Heart left ventricle (tissue), 16 donors: ENCODE measurements at regions of chr2 and their contacts with region 1.

Region 1: DNA sequence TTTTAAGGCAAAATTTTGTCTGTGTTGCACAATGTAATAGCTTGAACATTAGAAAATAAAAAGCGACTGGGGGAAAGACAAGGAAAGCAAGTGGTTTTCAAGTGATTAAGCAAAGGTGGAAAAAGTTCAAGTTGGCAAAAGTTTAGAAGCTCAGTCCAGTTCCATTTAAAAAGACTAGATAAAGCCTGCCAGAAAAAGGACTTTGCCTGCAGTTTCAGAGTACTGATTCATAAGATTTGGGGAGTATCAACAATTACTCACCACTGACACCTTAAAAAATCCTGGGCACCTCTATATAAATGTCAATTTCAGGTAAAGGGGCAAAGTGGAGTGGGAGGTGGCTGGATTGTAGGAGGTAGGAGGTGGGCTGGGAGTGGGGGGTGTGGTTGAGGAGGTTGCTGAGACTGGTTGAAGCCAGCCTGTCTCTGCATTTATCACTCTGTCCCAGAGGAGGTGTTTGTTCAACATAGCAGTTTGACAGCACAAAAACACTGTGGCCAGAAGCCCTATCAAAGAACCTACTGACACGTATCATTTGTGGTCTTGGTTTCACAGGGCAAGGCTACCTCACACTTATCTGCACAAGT is 14.6 kb downstream of the ZEB2 start:
- DNase-seq: peak in 2 of 5 donors; percentile 50 to 63
- ATAC-seq: peak; percentile 59 to 78 (median 76)
- H3K4me3 ChIP-seq: peak overlapping the region in 3 of 12 donors; percentile 10 to 24 (median 15)
- H3K27ac ChIP-seq: peak overlapping the region; percentile 54 to 99 (median 98)
- H3K4me1 ChIP-seq: peaks cover 6 to 100% (median 69%) of the 10 kb centered on the region in 12 donors
- H3K27me3 ChIP-seq: no peaks in the 10 kb centered on the region
- CTCF ChIP-seq: no peak
- POLR2A ChIP-seq: no peak

Region 2: GRCh38 chr2:144304202-144304601 is 201.1 kb before region 1 on chr2:
- intact Hi-C with region 1: no loop called
- DNase-seq: no peak
- ATAC-seq: no peak
- H3K4me3 ChIP-seq: no peak overlapping the region
- H3K27ac ChIP-seq: no peak overlapping the region
- H3K4me1 ChIP-seq: peaks cover 0 to 4% (median 0%) of the 10 kb centered on the region in 12 donors
- H3K27me3 ChIP-seq: no peaks in the 10 kb centered on the region
- CTCF ChIP-seq: no peak
- POLR2A ChIP-seq: no peak

Region 3: GRCh38 chr2:144430722-144431391 is 74.5 kb before region 1 on chr2:
- intact Hi-C with region 1: loop called in 4 of 10 experiments (anchors 5 kb)
- DNase-seq: peak in 2 of 5 donors; percentile 44 to 46
- ATAC-seq: peak; percentile 81 to 85 (median 82)
- H3K4me3 ChIP-seq: peak overlapping the region in 10 of 12 donors; percentile 3 to 50 (median 35)
- H3K27ac ChIP-seq: peak overlapping the region; percentile 37 to 82 (median 75)
- H3K4me1 ChIP-seq: peaks cover 0 to 97% (median 51%) of the 10 kb centered on the region in 12 donors
- H3K27me3 ChIP-seq: no peaks in the 10 kb centered on the region
- CTCF ChIP-seq: no peak
- POLR2A ChIP-seq: no peak

Region 4: DNA sequence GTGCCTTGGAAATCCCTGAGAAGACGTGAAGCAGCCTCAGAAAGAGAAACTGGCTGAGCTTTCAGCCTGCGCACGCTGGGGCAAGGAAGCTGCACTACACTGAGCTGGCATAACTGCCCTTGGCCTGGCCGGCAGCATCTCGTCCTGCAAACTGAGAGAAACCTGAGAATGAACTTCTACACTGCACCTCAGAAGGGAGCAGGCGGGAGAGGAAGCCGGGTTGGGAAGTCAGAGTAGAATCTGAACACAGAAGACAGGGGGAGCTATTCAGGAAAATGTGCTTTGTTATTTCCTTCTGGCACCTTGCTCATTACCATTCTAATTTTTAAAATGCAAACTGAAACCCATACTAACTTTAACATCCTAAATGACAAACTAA is 56.3 kb before region 1 on chr2:
- intact Hi-C with region 1: loop called in 4 of 10 experiments (anchors 2 to 5 kb)
- DNase-seq: peak in 2 of 5 donors; percentile 42 to 56
- ATAC-seq: peak; percentile 33 to 74 (median 60)
- H3K4me3 ChIP-seq: peak overlapping the region in 7 of 12 donors; percentile 10 to 29 (median 23)
- H3K27ac ChIP-seq: peak overlapping the region; percentile 23 to 63 (median 58)
- H3K4me1 ChIP-seq: peaks cover 0 to 86% (median 45%) of the 10 kb centered on the region in 12 donors
- H3K27me3 ChIP-seq: no peaks in the 10 kb centered on the region
- CTCF ChIP-seq: peak in 11 of 12 donors; percentile 17 to 63 (median 46)
- POLR2A ChIP-seq: no peak

Region 5: GRCh38 chr2:144456680-144457079 is 48.7 kb before region 1 on chr2:
- intact Hi-C with region 1: loop called in 6 of 10 experiments (anchors 2 to 5 kb)
- DNase-seq: peak in 1 of 5 donors; percentile 38
- ATAC-seq: peak; percentile 50 to 89 (median 68)
- H3K4me3 ChIP-seq: no peak overlapping the region
- H3K27ac ChIP-seq: peak overlapping the region in 6 of 12 donors; percentile 31 to 73 (median 46)
- H3K4me1 ChIP-seq: peaks cover 0 to 100% (median 74%) of the 10 kb centered on the region in 12 donors
- H3K27me3 ChIP-seq: no peaks in the 10 kb centered on the region
- CTCF ChIP-seq: no peak
- POLR2A ChIP-seq: no peak